Astrocyte of the cerebellum (primary cell): ENCODE measurements at regions of chr6 and their contacts with region 1.

Region 1: DNA sequence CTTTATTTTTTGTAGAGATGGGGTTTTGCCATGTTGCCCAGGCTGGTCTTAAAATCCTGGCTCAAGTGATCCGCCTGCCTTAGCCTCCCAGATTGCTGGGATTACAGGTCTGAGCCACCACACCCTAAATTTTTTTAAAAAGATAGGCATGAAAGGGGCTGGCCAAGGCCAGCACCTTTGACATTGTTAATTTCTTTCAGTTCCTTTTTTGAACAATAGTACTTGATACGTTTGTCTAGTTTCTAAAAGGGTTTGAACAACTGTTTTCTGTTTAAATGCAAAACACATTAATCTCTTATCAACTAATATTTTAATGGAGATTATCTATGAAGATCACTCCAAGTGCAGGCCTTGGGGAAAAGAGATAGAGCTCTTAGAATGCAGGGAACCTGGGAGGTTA is 37.6 kb upstream of the PTPRK start:
- DNase-seq: no peak
- H3K4me3 ChIP-seq: no peak overlapping the region
- CTCF ChIP-seq: no peak

Region 2: DNA sequence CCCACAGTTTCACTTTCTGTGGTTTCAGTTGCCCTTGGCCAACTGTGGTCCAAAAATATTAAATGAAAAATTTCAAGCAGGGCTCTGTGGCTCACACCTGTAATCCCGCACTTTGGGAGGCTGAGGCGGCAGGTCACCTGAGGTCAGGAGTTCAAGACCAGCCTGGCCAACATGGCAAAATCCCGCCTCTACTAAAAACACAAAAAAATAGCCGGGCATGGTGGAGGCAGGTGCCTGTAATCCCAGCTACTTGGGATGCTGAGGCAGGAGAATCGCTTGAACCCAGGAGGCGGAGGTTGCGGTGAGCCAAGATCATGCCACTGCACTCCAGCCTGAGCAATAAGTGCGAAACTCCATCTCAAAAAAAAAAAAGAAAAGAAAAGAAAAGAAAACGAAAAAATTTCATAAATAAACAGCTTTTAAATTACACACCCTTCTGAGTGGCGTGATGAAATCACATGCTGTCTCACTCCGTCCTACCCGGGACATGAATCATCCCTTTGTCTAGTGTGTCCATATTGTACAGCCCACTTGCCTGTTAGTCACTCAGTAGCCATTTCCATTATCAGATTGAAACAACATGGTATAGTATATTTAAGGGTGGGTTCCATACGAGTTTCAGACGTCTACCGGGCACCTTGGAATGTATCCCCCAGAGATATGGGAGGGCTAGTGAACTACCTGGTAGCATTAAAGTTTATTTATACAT is 49.3 kb before region 1 on chr6:
- in situ Hi-C with region 1: no loop called
- DNase-seq: no peak
- H3K4me3 ChIP-seq: no peak overlapping the region
- CTCF ChIP-seq: no peak

Region 3: DNA sequence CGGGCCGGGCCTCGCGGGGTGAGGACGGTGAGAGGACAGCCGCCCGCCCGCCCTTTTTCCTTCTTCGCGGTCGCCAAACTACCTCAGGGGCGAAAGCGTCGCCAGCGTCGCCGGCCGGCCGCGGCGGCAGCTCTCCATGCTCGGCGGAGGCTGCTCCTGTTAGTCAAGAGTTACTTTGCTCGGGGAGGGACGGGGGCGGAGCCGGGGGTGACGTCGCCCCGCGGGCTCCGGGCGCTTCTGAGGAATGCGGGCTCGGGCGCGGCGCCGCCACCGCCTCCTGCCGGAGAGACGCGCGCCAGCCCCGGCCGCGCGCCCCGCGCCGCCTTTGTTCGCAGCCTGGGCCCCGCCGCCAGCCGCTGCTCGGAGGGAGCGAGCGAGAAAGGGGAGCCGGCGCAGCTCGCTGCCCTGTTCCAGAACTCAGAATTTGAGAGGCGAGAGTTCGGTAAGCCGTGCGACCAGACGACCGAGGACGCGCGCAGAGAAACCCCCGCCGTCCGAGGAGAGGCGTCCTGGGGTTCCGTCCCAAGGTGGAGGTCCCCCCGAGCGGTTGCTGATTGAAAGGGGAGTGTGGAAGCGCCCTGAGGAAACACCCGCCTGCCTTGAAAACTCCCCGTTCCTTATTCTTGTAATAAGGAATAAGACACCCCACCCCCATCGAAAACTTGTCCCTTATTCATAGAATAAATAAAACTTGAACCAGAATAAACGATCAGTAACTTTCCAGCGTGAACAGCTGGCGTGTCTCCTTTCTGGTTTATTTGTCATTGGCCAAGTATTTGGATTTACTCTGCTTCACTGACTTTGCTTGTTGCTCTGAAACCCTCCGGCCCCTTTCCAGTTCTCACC is 37.4 kb before region 1 on chr6 and contains the start of gene PTPRK:
- in situ Hi-C with region 1: loop called (anchors 5 kb)
- DNase-seq: peak; percentile 83
- H3K4me3 ChIP-seq: peak within 1 kb of the TSS; percentile 99
- CTCF ChIP-seq: peak; percentile 3